Left ventricle myocardium inferior (tissue), 1 donor: ENCODE measurements at regions of chr4 and their contacts with region 1.

Region 1: DNA sequence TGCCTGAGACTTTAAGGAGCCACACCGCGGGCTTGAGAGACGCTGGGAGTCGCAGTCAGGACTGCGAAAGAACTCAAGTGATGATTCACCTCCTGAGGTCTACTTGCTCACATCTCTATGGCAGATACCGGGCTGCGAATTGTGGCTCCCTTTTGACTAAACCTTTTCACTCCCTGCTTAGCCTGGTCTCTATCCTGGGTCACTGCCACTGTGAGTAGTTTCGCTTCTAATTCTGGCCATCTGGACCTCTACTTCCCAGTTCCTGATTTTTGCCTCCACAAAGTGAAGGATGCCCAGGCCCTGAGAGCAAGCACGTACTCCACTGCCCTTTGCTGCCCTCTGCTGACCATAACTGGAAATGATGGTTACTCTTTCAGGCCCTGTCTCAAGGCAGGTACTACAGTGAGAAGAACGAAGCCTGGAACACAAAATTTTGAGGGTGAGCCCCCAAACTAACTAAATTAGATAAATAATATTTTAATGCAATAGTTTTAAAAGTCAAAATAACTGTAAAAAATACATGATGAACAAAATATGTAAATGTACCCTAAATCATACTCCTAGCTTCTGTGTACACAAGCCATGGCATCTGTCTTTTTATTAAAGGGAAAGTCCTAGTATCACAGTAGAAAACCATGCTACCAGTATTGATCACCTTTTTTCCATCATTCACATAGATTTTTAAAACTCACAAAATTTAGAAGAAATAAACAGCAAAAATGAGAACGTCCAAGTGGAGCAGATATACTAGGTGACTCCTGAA is 16.7 kb downstream of the MAD2L1 start:
- DNase-seq: peak; percentile 50
- H3K4me3 ChIP-seq: peak overlapping the region; percentile 37
- H3K27ac ChIP-seq: peak overlapping the region; percentile 55
- H3K4me1 ChIP-seq: peaks cover under 1% of the 10 kb centered on the region
- H3K27me3 ChIP-seq: no peaks in the 10 kb centered on the region
- CTCF ChIP-seq: peak; percentile 88

Region 2: DNA sequence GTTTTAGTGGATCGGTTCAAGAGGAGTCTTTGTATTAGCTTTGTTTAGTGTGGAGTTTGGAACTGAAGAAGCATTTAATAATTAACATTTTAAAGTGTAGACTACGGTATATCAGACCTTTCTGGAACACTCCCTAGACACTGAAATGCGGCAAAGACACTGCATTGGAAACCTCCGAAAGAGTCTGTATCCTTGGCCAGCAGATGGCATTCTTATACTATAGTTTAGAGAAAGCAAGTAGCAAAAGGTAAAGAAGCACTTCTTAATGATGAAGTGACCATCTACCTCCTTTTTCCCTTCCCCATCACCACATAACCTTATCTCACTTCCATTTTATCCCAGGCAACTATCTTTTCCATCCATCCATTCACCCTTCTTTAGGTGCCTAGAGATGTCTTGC is 735.6 kb before region 1 on chr4:
- intact Hi-C with region 1: loop called (anchors 10 kb)
- DNase-seq: no peak
- H3K4me3 ChIP-seq: no peak overlapping the region
- H3K27ac ChIP-seq: no peak overlapping the region
- H3K4me1 ChIP-seq: no peaks in the 10 kb centered on the region
- H3K27me3 ChIP-seq: no peaks in the 10 kb centered on the region
- CTCF ChIP-seq: peak; percentile 72

Region 3: DNA sequence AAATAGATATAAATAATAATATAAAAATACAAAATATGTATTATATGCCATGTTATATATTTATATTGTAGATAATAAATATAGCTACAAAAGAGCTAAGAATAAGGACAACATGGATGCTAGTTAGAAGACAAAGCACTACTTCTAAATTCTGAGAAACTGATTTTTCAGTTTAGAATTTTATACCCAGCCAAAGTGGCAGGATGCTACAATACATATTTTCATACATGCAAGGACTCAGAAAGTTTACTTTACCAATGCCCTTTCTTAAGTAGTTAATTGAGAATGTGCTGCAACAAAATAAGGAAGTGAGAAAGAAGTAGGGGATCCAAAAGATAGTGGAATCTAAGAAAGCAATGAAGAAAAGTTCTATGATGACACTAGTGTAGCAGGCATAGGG is 485.8 kb before region 1 on chr4:
- intact Hi-C with region 1: loop called (anchors 10 kb)
- DNase-seq: no peak
- H3K4me3 ChIP-seq: no peak overlapping the region
- H3K27ac ChIP-seq: no peak overlapping the region
- H3K4me1 ChIP-seq: no peaks in the 10 kb centered on the region
- H3K27me3 ChIP-seq: no peaks in the 10 kb centered on the region
- CTCF ChIP-seq: no peak

Region 4: DNA sequence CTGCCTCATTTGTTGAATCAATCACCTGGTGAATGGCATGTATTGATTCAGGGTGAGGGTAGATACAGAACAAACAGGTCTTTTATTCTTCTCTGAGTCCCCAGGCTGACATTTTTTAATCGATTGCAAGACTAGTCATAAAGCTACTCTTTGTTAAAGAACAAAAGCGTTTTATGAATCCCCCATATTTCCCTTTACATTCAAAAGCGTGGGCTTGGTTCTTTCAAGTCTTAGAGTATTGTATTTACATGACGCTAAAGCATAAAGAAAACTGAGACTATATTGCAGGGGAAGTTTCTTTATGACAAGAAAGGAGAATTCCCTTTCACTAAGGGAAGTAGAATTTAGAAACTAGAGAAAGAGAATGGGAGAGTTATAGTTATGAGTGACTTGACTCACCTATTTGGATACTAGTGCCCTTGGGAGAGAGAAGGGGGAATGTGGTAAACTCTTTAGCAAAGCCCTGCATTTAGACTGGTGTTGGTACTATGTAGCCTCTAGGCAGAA is 352.0 kb before region 1 on chr4:
- intact Hi-C with region 1: loop called (anchors 5 kb)
- DNase-seq: no peak
- H3K4me3 ChIP-seq: no peak overlapping the region
- H3K27ac ChIP-seq: no peak overlapping the region
- H3K4me1 ChIP-seq: no peaks in the 10 kb centered on the region
- H3K27me3 ChIP-seq: no peaks in the 10 kb centered on the region
- CTCF ChIP-seq: no peak